ENCODE measurements at regions of chr21 and their contacts with region 1.

Region 1: GRCh38 chr21:18430341-18430740 is 26.8 kb upstream of the TMPRSS15 start:
- DNase-seq: no peak

Region 2: GRCh38 chr21:18468790-18469189 is 38.4 kb after region 1 on chr21:
- CTCF ChIA-PET with region 1: interaction called, 11 read pairs
- POLR2A ChIA-PET with region 1: no interaction called
- DNase-seq: no peak

Measured in HEK293T (cell line).